Calu3 (cell line): ENCODE measurements at regions of chr12 and their contacts with region 1.

Region 1: DNA sequence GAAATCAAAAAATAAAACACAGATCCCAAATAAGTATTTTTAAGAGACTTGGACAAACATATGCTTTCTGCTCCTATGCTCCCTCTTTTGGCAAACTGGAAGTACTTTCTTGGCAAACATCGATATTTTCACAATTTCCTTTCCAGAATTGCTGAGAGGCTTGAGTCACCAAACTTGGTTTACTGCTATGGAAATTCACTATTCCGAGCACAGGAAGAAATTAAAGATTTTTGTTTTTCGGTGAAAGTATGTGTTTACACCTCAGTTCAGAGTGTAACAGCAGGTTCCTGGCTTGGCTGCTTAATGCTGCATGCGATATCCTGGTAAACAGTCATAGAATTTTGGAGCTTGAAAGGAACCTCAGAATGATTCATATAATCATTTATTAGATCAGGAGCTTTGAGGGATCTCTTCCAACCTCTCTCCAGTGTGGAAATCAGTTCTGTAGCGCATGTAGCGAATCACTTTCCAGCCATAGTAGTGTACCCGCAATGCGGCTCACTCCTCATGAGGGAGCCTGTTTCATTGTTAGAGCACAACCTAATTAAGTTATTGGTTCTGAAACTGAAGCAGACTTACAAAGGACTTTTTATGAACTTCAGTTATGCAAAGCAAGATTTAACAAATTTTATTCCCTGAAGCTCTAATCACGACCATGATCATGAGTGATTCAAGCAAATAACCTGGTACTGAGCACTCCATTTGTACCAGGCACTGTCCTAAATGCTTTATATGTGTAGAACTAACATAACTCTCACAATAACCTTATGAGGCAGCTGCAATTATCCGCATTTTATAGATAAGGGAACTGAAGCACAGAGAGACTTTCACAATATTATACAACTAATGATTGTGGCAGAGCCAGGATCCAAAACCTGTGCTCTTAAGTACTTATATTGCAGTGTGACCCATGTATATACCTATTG is 56.4 kb upstream of the ATP2A2 start:
- DNase-seq: no peak
- H3K4me3 Mint-ChIP-seq: no peak overlapping the region
- H3K27ac Mint-ChIP-seq: peak overlapping the region; percentile 15
- H3K4me1 Mint-ChIP-seq: peaks cover 17% of the 10 kb centered on the region
- H3K27me3 Mint-ChIP-seq: no peaks in the 10 kb centered on the region
- CTCF ChIP-seq: peak; percentile 47

Region 2: DNA sequence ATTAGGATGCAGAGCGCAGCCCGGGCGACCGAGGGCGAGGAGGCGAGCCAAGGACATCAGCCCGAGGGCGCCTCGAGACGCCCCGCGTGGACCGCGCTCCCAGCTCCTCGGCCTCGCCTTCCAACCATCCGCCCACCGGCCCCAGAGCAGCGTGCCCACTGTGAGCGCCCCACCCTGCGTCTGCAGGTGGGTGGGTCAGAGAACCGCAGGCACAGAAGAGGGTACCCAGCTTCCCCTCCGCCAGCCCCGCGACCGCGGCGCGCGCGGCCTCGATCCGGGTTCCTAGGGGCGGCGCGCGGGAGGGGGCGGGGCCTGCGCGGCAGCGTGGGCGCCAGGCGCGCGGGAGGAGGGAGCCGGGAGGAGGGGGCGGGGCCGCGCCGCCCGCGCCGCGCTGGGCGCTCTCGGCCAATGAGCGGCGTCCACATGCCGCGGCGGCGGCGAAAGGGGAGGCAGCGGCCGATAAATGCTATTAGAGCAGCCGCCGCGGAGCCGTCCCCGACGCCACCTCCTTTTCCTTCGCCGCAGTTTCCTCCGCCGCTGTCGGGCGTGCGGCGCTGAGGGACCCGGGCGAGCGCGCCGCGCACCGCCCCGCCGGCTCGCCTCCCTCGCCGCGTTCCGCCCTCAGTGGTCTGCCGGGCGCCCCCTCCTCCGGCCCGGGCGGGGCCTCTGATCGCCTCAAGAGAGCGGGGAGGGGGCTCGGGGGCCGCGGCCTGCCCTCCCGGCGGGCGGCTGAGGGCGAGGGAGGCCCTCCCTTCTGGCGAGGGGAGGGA is 56.3 kb after region 1 on chr12 and contains the start of gene ATP2A2:
- CTCF ChIA-PET with region 1: interaction called, 5 read pairs
- intact Hi-C with region 1: loop called (anchors 2 kb)
- DNase-seq: peak; percentile 95
- H3K4me3 Mint-ChIP-seq: peak within 1 kb of the TSS; percentile 90
- H3K27ac Mint-ChIP-seq: peak within 1 kb of the TSS; percentile 88
- H3K4me1 Mint-ChIP-seq: peaks cover 24% of the 10 kb centered on the region
- H3K27me3 Mint-ChIP-seq: no peaks in the 10 kb centered on the region
- CTCF ChIP-seq: no peak
- total RNA-seq, gene ATP2A2: 388 and 437 TPM in 2 replicates